Body of pancreas (tissue), 4 donors: ENCODE measurements at regions of chr4 and their contacts with region 1.

Region 1: GRCh38 chr4:47926639-47927258 is 12.4 kb upstream of the NFXL1 start:
- DNase-seq: peak; percentile 60 to 73 (median 66)
- ATAC-seq: peak; percentile 95
- H3K4me3 ChIP-seq: no peak overlapping the region
- H3K27ac ChIP-seq: peak overlapping the region in 3 of 4 donors; percentile 22 to 60 (median 53)
- H3K4me1 ChIP-seq: peaks cover 5% of the 10 kb centered on the region
- H3K27me3 ChIP-seq: no peaks in the 10 kb centered on the region
- CTCF ChIP-seq: peak; percentile 54 to 80 (median 72)
- POLR2A ChIP-seq: no peak

Region 2: GRCh38 chr4:47590325-47590724 is 336.4 kb before region 1 on chr4:
- intact Hi-C with region 1: no loop called
- DNase-seq: no peak
- ATAC-seq: no peak
- H3K4me3 ChIP-seq: no peak overlapping the region
- H3K27ac ChIP-seq: no peak overlapping the region
- H3K4me1 ChIP-seq: no peaks in the 10 kb centered on the region
- H3K27me3 ChIP-seq: no peaks in the 10 kb centered on the region
- CTCF ChIP-seq: no peak
- POLR2A ChIP-seq: no peak

Region 3: DNA sequence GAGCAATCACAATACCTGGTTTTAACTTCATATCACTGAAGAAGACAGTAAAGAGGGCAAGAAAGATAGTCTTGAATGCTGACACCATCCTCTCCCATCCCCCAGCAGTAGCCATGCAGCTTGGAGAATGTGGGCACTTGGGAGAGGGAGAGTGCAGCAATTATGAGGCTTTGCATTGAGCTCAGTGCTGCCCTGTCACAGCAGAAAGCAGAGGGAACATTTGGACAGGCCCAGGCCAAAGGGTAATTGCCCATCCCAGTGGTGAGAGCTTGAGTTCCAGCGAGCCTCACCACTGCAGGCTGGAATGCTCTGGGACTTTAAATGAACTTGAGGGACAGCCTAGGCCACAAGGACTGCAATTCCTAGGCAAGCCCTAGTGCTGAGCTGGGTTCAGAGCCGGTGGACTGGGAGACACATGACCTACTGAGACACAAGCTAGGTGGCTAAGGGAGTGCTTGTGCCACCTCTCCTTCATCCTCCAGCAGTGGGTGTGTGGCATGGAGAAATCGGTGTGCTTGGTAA is 125.2 kb before region 1 on chr4:
- intact Hi-C with region 1: no loop called
- DNase-seq: no peak
- ATAC-seq: no peak
- H3K4me3 ChIP-seq: no peak overlapping the region
- H3K27ac ChIP-seq: no peak overlapping the region
- H3K4me1 ChIP-seq: no peaks in the 10 kb centered on the region
- H3K27me3 ChIP-seq: no peaks in the 10 kb centered on the region
- CTCF ChIP-seq: no peak
- POLR2A ChIP-seq: no peak

Region 4: DNA sequence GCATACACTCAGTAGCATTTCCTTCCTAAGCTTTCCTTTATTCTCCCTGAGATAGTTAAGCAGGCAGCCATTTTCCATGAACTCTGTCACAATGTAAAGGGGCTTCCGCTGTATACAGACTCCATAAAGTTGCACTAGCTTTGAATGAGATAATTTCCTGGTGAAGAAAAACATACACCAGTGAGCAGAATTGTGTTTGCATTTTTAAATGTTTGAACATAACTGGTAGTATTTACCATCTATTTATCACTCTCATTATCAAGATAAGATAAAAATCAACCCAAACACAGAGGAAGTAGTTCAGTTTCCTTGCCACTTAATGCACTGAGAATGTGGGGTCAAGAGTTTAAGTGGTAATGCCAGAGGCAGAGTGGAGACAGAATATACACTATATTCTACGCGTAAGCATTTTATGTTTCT is 153.2 kb after region 1 on chr4:
- intact Hi-C with region 1: loop called (anchors 10 kb)
- DNase-seq: no peak
- ATAC-seq: peak; percentile 68
- H3K4me3 ChIP-seq: no peak overlapping the region
- H3K27ac ChIP-seq: peak overlapping the region in 2 of 4 donors; percentile 24 to 36
- H3K4me1 ChIP-seq: peaks cover 8% of the 10 kb centered on the region
- H3K27me3 ChIP-seq: no peaks in the 10 kb centered on the region
- CTCF ChIP-seq: no peak
- POLR2A ChIP-seq: no peak

Region 5: GRCh38 chr4:48141048-48141447 is 214.3 kb after region 1 on chr4:
- intact Hi-C with region 1: no loop called
- DNase-seq: no peak
- ATAC-seq: peak; percentile 60
- H3K4me3 ChIP-seq: no peak overlapping the region
- H3K27ac ChIP-seq: no peak overlapping the region
- H3K4me1 ChIP-seq: no peaks in the 10 kb centered on the region
- H3K27me3 ChIP-seq: no peaks in the 10 kb centered on the region
- CTCF ChIP-seq: peak; percentile 39 to 69 (median 61)
- POLR2A ChIP-seq: no peak

Region 6: GRCh38 chr4:48212165-48212564 is 285.4 kb after region 1 on chr4:
- intact Hi-C with region 1: no loop called
- DNase-seq: no peak
- ATAC-seq: no peak
- H3K4me3 ChIP-seq: no peak overlapping the region
- H3K27ac ChIP-seq: no peak overlapping the region
- H3K4me1 ChIP-seq: no peaks in the 10 kb centered on the region
- H3K27me3 ChIP-seq: no peaks in the 10 kb centered on the region
- CTCF ChIP-seq: no peak
- POLR2A ChIP-seq: no peak